ENCODE measurements at regions of chr9 and their contacts with region 1.

Region 1: GRCh38 chr9:34637356-34638137 is at the start of gene SIGMAR1:
- DNase-seq: peak; percentile 97
- ATAC-seq: peak; percentile 91
- H3K4me3 Mint-ChIP-seq: peak within 1 kb of the TSS; percentile 87
- H3K27ac Mint-ChIP-seq: peak within 1 kb of the TSS; percentile 84
- H3K4me1 Mint-ChIP-seq: peaks cover 31% of the 10 kb centered on the region
- H3K27me3 Mint-ChIP-seq: no peaks in the 10 kb centered on the region
- total RNA-seq, gene SIGMAR1: 48.8 to 55.4 TPM

Region 2: DNA sequence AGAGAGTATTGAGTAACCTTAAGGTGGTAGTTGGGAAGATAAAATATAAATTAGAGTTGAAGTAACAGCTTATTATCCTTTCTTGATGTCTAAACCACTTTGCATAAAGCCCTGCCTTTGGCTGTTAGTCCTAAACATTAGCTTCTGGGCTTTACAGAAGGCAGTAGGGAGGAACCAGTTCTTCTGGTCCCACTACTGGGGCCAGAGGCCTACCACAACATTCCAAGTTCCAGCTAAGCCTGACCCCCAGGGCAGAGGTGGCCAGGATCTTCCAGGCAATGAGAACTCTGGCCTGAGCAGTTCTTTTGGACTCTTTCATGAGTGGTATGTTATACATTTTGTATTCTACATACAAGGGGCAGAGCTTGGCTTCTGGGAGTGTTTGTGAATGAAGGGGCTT is 152.9 kb before region 1 on chr9:
- POLR2A ChIA-PET with region 1: no interaction called
- DNase-seq: no peak
- ATAC-seq: no peak
- H3K4me3 Mint-ChIP-seq: no peak overlapping the region
- H3K27ac Mint-ChIP-seq: no peak overlapping the region
- H3K4me1 Mint-ChIP-seq: peaks cover 1% of the 10 kb centered on the region
- H3K27me3 Mint-ChIP-seq: peaks cover 20% of the 10 kb centered on the region

Region 3: GRCh38 chr9:34600908-34601307 is 36.6 kb before region 1 on chr9:
- POLR2A ChIA-PET with region 1: no interaction called
- DNase-seq: no peak
- ATAC-seq: no peak
- H3K4me3 Mint-ChIP-seq: no peak overlapping the region
- H3K27ac Mint-ChIP-seq: no peak overlapping the region
- H3K4me1 Mint-ChIP-seq: no peaks in the 10 kb centered on the region
- H3K27me3 Mint-ChIP-seq: peaks cover 7% of the 10 kb centered on the region

Region 4: GRCh38 chr9:34611829-34612630 is 25.5 kb before region 1 on chr9 and contains the start of gene RPP25L:
- POLR2A ChIA-PET with region 1: interaction called, 75 read pairs
- DNase-seq: peak; percentile 97
- ATAC-seq: peak; percentile 92
- H3K4me3 Mint-ChIP-seq: peak within 1 kb of the TSS; percentile 94
- H3K27ac Mint-ChIP-seq: peak within 1 kb of the TSS; percentile 92
- H3K4me1 Mint-ChIP-seq: peaks cover 14% of the 10 kb centered on the region
- H3K27me3 Mint-ChIP-seq: no peaks in the 10 kb centered on the region
- total RNA-seq, gene RPP25L: 27.2 to 29.3 TPM

Region 5: GRCh38 chr9:34620061-34620994 is 17.2 kb before region 1 on chr9 and contains the start of gene DCTN3:
- POLR2A ChIA-PET with region 1: interaction called, 75 read pairs
- DNase-seq: peak; percentile 83
- ATAC-seq: peak; percentile 98
- H3K4me3 Mint-ChIP-seq: peak within 1 kb of the TSS; percentile 94
- H3K27ac Mint-ChIP-seq: peak within 1 kb of the TSS; percentile 83
- H3K4me1 Mint-ChIP-seq: peaks cover 20% of the 10 kb centered on the region
- H3K27me3 Mint-ChIP-seq: peaks cover 31% of the 10 kb centered on the region
- total RNA-seq, gene DCTN3: 121 to 122 TPM

Region 6: DNA sequence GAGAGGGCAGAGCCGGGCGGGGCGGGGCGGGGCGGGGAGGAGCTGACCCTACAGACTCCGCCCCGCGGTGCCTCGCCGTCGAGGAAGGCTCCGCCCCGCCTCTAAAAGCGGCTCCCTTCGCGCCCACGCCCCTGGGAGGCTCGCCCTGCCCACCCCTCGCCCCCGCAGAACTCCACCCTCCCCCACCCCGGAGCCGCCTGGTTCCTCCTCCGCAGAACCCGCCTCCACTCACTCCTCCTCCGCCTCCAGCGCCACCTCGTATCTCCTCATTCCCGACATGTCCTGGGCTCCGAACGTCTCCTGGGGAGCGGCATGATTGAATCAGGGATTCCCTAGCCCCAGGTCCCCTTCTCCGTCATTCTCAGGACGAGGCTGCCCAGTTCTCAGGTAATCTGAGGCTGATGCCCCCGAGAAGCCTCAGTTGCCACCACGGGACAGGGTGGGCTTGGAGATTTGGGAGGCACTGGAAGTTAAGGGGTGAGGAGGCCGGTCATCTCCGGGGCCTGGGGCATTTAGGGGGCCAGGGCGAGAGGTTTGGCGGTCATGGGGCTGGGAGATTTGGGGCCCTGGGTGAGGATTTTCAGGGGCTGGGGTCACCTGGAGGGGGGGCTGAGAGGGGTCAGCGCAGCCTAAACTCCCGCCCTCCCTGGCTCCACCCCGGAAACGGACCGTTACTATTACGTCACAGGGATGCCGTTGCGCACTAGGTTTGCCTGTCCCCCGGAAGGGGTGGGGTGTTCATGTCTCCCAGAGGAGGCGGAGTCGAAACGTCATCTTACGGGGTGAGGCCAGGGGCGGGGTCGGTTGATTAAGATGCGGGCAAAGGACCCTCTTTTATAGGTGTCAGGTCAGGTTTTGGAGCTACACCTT is 28.1 kb after region 1 on chr9:
- POLR2A ChIA-PET with region 1: interaction called, 13 read pairs
- DNase-seq: peak; percentile 85
- ATAC-seq: peak; percentile 73
- H3K4me3 Mint-ChIP-seq: peak overlapping the region; percentile 91
- H3K27ac Mint-ChIP-seq: peak overlapping the region; percentile 91
- H3K4me1 Mint-ChIP-seq: peaks cover 32% of the 10 kb centered on the region
- H3K27me3 Mint-ChIP-seq: no peaks in the 10 kb centered on the region

Region 7: DNA sequence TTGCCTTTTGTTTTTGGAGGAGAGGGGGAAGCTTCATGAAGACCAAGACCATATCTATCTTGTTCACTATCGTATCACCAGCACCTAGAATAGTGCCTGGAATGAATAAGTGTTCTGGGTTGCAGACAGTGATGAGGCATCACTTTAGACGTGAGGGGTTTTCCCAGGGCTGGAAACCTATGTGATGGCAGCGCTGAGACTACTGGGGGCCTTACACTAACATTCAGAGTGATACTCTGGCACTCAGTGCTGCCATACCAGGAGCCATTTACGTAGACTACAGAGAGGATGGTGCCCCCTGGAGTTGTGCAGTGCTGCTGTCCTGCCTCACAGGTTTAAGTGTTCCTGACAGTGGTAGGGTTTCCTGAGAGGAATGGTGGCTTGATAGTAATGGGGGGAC is 46.6 kb after region 1 on chr9:
- POLR2A ChIA-PET with region 1: no interaction called
- DNase-seq: no peak
- ATAC-seq: no peak
- H3K4me3 Mint-ChIP-seq: no peak overlapping the region
- H3K27ac Mint-ChIP-seq: no peak overlapping the region
- H3K4me1 Mint-ChIP-seq: no peaks in the 10 kb centered on the region
- H3K27me3 Mint-ChIP-seq: no peaks in the 10 kb centered on the region